ENCODE measurements at regions of chr16 and their contacts with region 1.

Region 1: DNA sequence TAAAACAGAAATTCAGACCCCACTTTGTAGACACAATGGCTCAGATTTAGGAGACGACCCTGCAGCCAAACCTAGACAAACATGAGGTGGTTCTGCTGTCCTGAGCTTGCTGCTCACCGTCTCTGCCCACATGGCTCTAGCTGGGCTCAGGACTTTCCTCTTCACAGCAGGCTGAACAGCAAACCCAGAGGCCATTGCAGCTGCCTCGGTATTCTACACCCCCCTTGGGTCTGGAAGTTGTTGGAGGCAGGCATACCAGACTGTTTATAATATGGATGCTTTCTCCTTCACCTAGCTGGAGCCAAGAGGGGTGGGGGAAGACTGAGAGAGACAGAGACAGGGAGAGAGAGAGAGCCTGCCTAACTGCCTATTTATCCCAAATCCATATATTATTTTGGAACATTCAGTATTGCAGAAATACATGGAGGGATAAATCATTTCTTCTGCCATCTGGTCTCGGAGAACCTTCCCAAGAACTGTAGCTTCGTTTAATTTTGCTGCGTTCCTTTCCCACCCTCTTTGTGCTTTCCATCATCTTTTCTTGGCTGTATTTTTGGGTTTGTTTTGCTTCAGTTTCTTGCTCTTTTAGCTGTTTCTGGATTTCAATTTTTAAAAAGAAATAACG is 628.2 kb upstream of the RBFOX1 start:
- DNase-seq: no peak
- ATAC-seq: no peak
- H3K4me3 ChIP-seq: no peak overlapping the region
- H3K27ac ChIP-seq: no peak overlapping the region
- H3K4me1 ChIP-seq: no peaks in the 10 kb centered on the region
- H3K27me3 ChIP-seq: no peaks in the 10 kb centered on the region
- CTCF ChIP-seq: no peak

Region 2: GRCh38 chr16:6667393-6667792 is 37.0 kb before region 1 on chr16:
- intact Hi-C with region 1: loop called in 1 of 10 experiments (anchors 1 kb)
- DNase-seq: no peak
- ATAC-seq: no peak
- H3K4me3 ChIP-seq: no peak overlapping the region
- H3K27ac ChIP-seq: no peak overlapping the region
- H3K4me1 ChIP-seq: no peaks in the 10 kb centered on the region
- H3K27me3 ChIP-seq: peaks cover 0 to 4% (median 0%) of the 10 kb centered on the region in 7 donors
- CTCF ChIP-seq: no peak

Region 3: GRCh38 chr16:6803176-6803575 is 98.8 kb after region 1 on chr16:
- intact Hi-C with region 1: no loop called
- DNase-seq: no peak
- ATAC-seq: no peak
- H3K4me3 ChIP-seq: no peak overlapping the region
- H3K27ac ChIP-seq: no peak overlapping the region
- H3K4me1 ChIP-seq: no peaks in the 10 kb centered on the region
- H3K27me3 ChIP-seq: no peaks in the 10 kb centered on the region
- CTCF ChIP-seq: no peak

Region 4: DNA sequence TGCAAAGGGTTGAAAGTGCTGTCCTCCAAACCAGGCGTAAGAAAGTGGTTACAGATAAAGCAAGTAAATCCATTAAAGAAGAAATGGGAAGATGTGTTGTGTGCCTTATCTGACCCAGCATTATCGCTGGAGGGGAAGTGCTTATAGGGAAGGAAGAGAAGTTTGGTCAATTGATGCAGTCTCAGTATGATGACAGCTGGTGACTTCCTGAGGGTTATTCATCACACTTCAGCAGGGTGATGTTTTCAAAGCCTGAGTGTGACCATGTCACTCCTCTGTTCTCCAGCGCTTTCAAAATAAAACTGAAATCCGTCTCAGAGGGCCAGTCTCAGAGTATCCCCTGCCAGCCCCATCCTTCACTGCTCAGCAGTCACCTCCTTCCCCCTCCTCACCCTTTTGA is 122.8 kb after region 1 on chr16:
- intact Hi-C with region 1: no loop called
- DNase-seq: peak in 1 of 2 donors; percentile 7
- ATAC-seq: peak in 6 of 8 donors; percentile 31 to 59 (median 43)
- H3K4me3 ChIP-seq: no peak overlapping the region
- H3K27ac ChIP-seq: peak overlapping the region in 1 of 10 donors; percentile 70
- H3K4me1 ChIP-seq: no peaks in the 10 kb centered on the region
- H3K27me3 ChIP-seq: no peaks in the 10 kb centered on the region
- CTCF ChIP-seq: no peak

Measured in heart right ventricle (tissue), 16 donors.